HepG2 (cell line): ENCODE measurements at regions of chr7 and their contacts with region 1.

Region 1: DNA sequence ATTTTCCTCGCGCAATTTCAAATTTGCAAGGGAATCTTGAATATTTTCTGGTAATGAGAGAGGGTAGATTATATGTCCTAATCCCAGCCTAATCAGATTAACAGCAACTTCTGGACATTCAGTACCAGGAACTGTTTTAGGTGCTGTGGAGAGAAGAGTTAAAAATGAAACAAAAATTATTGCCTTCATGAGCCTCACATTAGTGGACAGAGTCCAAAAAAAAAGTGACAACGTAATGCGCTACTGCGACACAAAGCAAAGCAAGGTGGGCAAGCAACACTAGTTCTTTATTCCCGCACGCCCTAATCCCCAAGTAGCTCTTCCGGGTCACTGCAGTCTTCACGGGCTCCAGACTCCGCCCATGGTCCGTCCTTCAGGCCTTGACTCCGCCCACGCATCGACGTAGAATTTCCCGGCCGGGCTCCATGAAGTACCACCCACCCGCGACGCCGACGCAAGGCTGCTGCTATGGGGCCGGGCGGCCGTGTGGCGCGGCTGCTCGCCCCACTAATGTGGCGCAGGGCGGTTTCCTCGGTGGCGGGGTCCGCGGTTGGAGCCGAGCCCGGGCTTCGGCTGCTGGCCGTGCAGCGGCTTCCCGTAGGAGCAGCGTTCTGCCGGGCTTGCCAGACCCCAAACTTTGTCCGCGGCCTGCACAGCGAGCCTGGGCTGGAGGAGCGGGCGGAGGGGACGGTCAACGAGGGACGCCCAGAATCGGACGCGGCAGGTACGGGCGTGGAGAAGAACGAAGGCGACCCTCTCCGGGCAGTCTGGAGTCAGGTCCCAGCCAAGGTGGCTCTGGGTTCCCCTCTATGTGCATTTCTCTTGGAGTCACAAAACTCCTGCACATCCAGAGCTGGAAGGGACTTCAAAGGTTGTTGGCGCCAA is at the start of gene MALSU1:
- DNase-seq: peak; percentile 96
- ATAC-seq: peak; percentile 86
- H3K4me3 ChIP-seq: peak within 1 kb of the TSS; percentile 66 to 94 (median 93)
- H3K27ac ChIP-seq: peak within 1 kb of the TSS; percentile 89
- H3K4me1 ChIP-seq: peaks cover 74% of the 10 kb centered on the region
- H3K27me3 ChIP-seq: no peaks in the 10 kb centered on the region; a peak in 1 of 5 replicates
- CTCF ChIP-seq: no peak
- EP300 ChIP-seq: no peak
- POLR2A ChIP-seq: peak; percentile 90 to 92
- RAD21 ChIP-seq: peak; percentile 49; the same call in 1 of the 2 replicates
- total RNA-seq, gene MALSU1: 141 and 188 TPM in 2 replicates

Region 2: DNA sequence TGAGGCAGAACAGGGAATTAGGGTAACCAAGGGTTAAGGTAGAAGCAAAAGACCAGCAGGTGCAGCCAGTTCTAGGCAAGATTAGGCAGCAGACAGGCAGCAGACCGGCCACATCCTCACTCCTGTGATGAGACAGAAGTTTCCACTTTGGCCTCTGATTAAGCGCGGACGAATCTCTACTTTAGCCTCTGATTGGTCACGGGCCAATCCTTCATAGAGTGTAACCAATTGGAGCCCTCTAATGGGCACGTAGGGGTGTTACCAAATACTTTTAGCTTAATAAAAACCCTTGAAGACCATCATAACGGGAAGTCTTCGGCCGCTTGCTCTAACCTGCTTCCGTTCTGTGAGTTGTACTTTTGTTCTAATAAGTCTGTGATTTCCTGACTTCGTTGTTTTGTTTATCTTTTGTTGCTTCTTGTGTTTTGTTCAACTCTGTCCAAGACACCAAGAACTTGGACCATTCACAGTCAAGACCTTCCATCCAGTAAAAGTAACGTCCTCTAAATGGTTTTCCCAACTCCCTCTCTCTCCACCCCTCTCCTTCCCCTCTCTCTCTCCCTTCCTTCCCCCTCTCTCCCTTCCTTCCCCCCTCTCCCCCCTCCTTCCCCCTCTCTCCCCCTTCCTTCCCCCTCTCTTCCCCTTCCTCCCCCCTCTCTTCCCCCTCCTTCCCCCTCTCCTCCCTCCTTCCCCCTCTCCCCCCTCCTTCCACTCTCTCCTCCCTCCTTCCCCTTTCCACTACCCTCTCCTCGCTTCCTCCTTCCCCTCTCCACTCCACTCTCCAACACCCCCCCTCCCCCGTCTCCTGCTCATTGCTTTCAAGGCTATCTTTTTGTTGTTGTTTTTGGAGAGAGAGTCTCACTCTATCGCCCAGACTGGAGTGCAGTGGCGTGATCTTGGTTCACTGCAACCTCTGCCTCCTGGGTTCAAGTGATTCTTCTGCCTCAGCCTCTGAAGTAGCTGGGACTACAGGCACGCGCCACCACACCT is 13.2 kb before region 1 on chr7:
- CTCF ChIA-PET with region 1: no interaction called
- POLR2A ChIA-PET with region 1: interaction called, 15 read pairs
- in situ Hi-C with region 1: no loop called
- intact Hi-C with region 1: no loop called
- DNase-seq: no peak
- ATAC-seq: no peak
- H3K4me3 ChIP-seq: no peak overlapping the region
- H3K27ac ChIP-seq: no peak overlapping the region
- H3K4me1 ChIP-seq: peaks cover 54% of the 10 kb centered on the region
- H3K27me3 ChIP-seq: no peaks in the 10 kb centered on the region
- CTCF ChIP-seq: no peak
- EP300 ChIP-seq: no peak
- POLR2A ChIP-seq: no peak
- RAD21 ChIP-seq: no peak

Region 3: GRCh38 chr7:23315366-23315765 is 16.2 kb after region 1 on chr7:
- CTCF ChIA-PET with region 1: no interaction called
- POLR2A ChIA-PET with region 1: interaction called, 23 read pairs
- in situ Hi-C with region 1: no loop called
- intact Hi-C with region 1: no loop called
- DNase-seq: no peak
- ATAC-seq: no peak
- H3K4me3 ChIP-seq: no peak overlapping the region
- H3K27ac ChIP-seq: no peak overlapping the region
- H3K4me1 ChIP-seq: peaks cover 17% of the 10 kb centered on the region
- H3K27me3 ChIP-seq: no peaks in the 10 kb centered on the region
- CTCF ChIP-seq: no peak
- EP300 ChIP-seq: no peak
- POLR2A ChIP-seq: no peak
- RAD21 ChIP-seq: no peak

Region 4: GRCh38 chr7:23334482-23335056 is 35.4 kb after region 1 on chr7:
- CTCF ChIA-PET with region 1: no interaction called
- POLR2A ChIA-PET with region 1: interaction called, 69 read pairs
- in situ Hi-C with region 1: no loop called
- intact Hi-C with region 1: loop called (anchors 5 kb)
- DNase-seq: peak; percentile 94
- ATAC-seq: peak; percentile 76
- H3K4me3 ChIP-seq: no peak overlapping the region
- H3K27ac ChIP-seq: peak overlapping the region; percentile 84
- H3K4me1 ChIP-seq: peaks cover 78% of the 10 kb centered on the region
- H3K27me3 ChIP-seq: no peaks in the 10 kb centered on the region
- CTCF ChIP-seq: no peak
- EP300 ChIP-seq: peak; percentile 31 to 98; a peak in 2 of 4 replicates
- POLR2A ChIP-seq: no peak
- RAD21 ChIP-seq: no peak

Region 5: GRCh38 chr7:23357190-23358093 is 58.3 kb after region 1 on chr7:
- CTCF ChIA-PET with region 1: no interaction called
- POLR2A ChIA-PET with region 1: interaction called, 49 read pairs
- in situ Hi-C with region 1: no loop called
- intact Hi-C with region 1: no loop called
- DNase-seq: peak; percentile 91
- ATAC-seq: peak; percentile 67
- H3K4me3 ChIP-seq: peak overlapping the region in 1 of 3 experiments; percentile 36; a peak in 1 of 6 replicates
- H3K27ac ChIP-seq: peak overlapping the region; percentile 82
- H3K4me1 ChIP-seq: peaks cover 71% of the 10 kb centered on the region
- H3K27me3 ChIP-seq: no peaks in the 10 kb centered on the region
- CTCF ChIP-seq: peak; percentile 40
- EP300 ChIP-seq: peak in 1 of 2 experiments; percentile 83; a peak in 2 of 4 replicates
- POLR2A ChIP-seq: no peak
- RAD21 ChIP-seq: no peak

Region 6: DNA sequence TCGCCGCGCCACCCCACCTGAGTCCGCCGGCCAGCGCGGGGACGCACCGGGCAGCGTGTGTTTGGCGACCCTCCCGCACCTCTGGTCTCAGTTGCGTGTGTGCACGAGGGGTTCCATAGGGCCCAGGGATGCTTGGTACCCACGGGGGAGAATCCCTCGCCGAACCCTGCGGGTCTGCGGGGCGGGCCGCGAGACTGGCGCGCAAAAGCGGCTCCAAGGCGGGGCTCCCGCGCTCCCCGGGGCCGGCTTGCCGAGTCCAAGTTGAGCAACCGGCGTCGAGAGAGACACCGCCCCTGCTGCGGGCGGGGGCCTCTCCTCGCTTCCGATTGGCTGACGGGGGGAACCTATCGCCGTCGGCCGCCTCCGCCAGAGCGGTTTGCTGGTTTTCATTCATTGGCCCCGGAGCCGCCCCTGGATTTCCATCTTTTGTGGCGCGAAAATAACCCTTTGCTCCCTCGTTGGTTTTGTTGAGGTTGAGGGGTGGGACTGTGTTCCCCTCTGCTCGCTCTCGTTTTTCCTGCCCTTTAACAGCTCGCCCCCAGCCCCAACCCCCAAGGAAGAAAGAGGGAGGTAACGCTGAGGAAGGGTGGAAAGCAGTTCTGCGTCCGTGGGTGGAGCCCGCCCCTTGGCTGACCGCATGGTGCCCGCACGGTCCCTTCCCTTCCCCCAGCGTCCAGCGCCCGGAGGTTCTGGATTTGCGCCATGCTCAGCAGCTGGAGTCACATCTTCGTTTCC is 175.1 kb after region 1 on chr7:
- CTCF ChIA-PET with region 1: no interaction called
- POLR2A ChIA-PET with region 1: interaction called, 19 read pairs
- in situ Hi-C with region 1: no loop called
- intact Hi-C with region 1: loop called (anchors 1 kb)
- DNase-seq: peak; percentile 96
- ATAC-seq: peak; percentile 80
- H3K4me3 ChIP-seq: peak overlapping the region; percentile 86 to 93 (median 91)
- H3K27ac ChIP-seq: peak overlapping the region; percentile 96
- H3K4me1 ChIP-seq: peaks cover 25% of the 10 kb centered on the region
- H3K27me3 ChIP-seq: no peaks in the 10 kb centered on the region; a peak in 1 of 5 replicates
- CTCF ChIP-seq: peak; percentile 13; the same call in 1 of the 2 replicates
- EP300 ChIP-seq: 0 out of 4 replicates have a peak, but pooled peaks of 1 of the 2 experiments have one; percentile 5
- POLR2A ChIP-seq: peak in 1 of 2 experiments; percentile 74; a peak in 1 of 4 replicates
- RAD21 ChIP-seq: no peak; the same call in 1 of the 2 replicates